H1 (cell line): ENCODE measurements at regions of chr18 and their contacts with region 1.

Region 1: DNA sequence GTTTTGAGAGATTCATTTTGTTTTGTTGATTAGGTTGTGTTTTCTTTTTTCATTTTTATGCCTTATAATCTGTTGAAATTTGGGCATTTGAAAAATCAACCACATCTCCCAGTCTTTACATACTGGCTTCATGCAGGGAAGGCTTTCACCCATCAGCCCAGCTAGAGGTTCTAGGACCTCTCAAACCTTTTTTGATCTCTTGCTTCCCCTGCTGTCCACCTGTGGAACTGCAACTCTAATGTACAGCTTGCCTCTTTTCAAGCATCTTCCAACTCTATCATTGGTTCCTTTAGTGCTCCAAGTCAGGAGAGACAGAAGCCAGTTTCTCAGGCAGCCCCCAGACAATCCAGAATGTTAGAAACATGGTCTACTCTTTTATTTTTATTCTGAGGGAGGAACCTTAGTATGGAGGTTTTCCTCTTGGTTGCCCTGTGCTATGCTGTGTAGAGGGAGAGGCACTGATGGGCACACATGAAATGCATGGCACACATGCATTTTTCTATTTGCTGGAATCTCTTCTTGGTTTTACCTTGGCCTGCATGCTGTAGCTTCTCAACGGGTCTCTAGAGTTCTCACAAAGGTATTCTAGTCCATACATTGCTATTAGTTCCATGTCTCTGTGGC is 107.2 kb upstream of the L3MBTL4 start:
- DNase-seq: peak; percentile 44 to 85
- H3K4me3 ChIP-seq: no peak overlapping the region
- H3K27ac ChIP-seq: no peak overlapping the region
- H3K4me1 ChIP-seq: no peaks in the 10 kb centered on the region
- H3K27me3 ChIP-seq: no peaks in the 10 kb centered on the region
- CTCF ChIP-seq: peak; percentile 16 to 86 (median 81)
- EP300 ChIP-seq: no peak
- POLR2A ChIP-seq: no peak
- RAD21 ChIP-seq: peak; percentile 90 to 91

Region 2: GRCh38 chr18:6389005-6389404 is 132.9 kb before region 1 on chr18:
- CTCF ChIA-PET with region 1: no interaction called
- POLR2A ChIA-PET with region 1: no interaction called
- DNase-seq: no peak
- H3K4me3 ChIP-seq: no peak overlapping the region
- H3K27ac ChIP-seq: no peak overlapping the region
- H3K4me1 ChIP-seq: no peaks in the 10 kb centered on the region
- H3K27me3 ChIP-seq: no peaks in the 10 kb centered on the region
- CTCF ChIP-seq: no peak
- EP300 ChIP-seq: no peak
- POLR2A ChIP-seq: no peak
- RAD21 ChIP-seq: no peak

Region 3: GRCh38 chr18:6441200-6441599 is 80.7 kb before region 1 on chr18:
- CTCF ChIA-PET with region 1: no interaction called
- POLR2A ChIA-PET with region 1: no interaction called
- DNase-seq: no peak
- H3K4me3 ChIP-seq: no peak overlapping the region
- H3K27ac ChIP-seq: no peak overlapping the region
- H3K4me1 ChIP-seq: no peaks in the 10 kb centered on the region; a peak in 3 of 7 replicates
- H3K27me3 ChIP-seq: no peaks in the 10 kb centered on the region; a peak in 1 of 7 replicates
- CTCF ChIP-seq: no peak
- EP300 ChIP-seq: no peak
- POLR2A ChIP-seq: no peak
- RAD21 ChIP-seq: no peak

Region 4: DNA sequence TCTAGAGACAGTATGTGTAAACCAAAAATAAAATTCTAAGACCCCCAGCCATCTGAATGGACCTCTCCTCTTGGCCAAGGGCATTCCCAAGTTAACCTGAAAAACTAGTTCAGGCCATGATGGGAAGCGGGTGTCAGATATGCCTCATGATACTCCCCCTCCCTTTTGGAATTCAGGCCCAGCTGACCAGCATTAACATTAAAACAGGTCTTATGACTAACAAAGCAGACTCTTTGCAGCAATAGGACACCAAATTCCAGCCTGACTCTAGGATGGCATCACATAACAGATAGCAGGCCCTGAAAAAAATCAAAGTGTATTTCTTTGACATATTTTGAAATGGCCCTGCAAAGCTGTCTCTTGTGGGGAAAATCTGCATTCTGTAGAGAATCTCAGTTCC is 33.9 kb before region 1 on chr18:
- CTCF ChIA-PET with region 1: interaction called, 12 read pairs
- POLR2A ChIA-PET with region 1: no interaction called
- DNase-seq: peak in 1 of 2 experiments; percentile 46
- H3K4me3 ChIP-seq: peak overlapping the region in 1 of 4 experiments; percentile 15; a peak in 1 of 8 replicates
- H3K27ac ChIP-seq: no peak overlapping the region; the same call in 1 of the 2 replicates
- H3K4me1 ChIP-seq: peaks cover 5 to 16% (median 9%) of the 10 kb centered on the region in 4 experiments; a peak in 6 of 7 replicates
- H3K27me3 ChIP-seq: no peaks in the 10 kb centered on the region
- CTCF ChIP-seq: no peak
- EP300 ChIP-seq: no peak
- POLR2A ChIP-seq: no peak
- RAD21 ChIP-seq: no peak

Region 5: DNA sequence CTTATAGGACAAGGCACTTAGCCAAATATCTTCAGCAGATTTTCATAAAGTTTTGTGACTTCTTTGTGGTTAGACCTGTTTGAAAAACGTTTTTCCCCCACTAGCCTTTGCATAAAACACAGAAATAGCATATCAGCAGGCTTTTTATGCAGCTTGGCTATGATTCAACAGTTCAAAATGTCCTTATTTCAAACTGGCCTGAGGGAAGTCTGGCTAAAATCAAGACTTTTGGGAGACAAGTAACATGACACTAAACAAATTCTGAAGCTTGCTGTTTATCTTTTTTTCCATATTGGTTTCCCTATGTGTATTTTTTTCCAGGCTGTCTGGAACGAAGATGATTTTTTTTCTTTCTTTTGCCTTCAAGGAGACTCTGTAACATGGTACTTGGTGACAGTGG is 12.1 kb before region 1 on chr18:
- CTCF ChIA-PET with region 1: interaction called, 10 read pairs
- POLR2A ChIA-PET with region 1: no interaction called
- DNase-seq: no peak
- H3K4me3 ChIP-seq: no peak overlapping the region
- H3K27ac ChIP-seq: no peak overlapping the region
- H3K4me1 ChIP-seq: peaks cover 0 to 4% (median 0%) of the 10 kb centered on the region in 4 experiments; a peak in 1 of 7 replicates
- H3K27me3 ChIP-seq: no peaks in the 10 kb centered on the region
- CTCF ChIP-seq: no peak
- EP300 ChIP-seq: no peak
- POLR2A ChIP-seq: no peak
- RAD21 ChIP-seq: no peak

Region 6: DNA sequence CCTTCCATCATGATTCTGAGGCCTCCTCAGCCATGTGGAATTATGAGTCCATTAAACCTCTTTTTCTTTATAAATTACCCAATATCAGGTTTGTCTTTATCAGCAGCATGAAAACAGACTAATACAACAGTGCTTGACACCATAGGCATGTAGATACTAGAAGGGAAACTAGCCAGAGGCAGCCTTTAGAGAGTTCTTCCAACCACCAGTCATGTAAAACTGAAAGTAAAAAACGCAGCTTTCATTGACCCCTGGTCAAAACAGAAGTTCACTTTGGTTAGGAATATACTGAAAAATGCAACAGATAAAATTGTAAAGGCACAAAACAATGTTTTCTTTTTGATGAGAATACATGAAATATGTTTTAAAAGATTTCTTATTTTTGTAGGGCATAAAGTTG is 15.6 kb after region 1 on chr18:
- CTCF ChIA-PET with region 1: interaction called, 13 read pairs
- POLR2A ChIA-PET with region 1: no interaction called
- DNase-seq: no peak
- H3K4me3 ChIP-seq: no peak overlapping the region
- H3K27ac ChIP-seq: no peak overlapping the region
- H3K4me1 ChIP-seq: 0 out of 7 replicates have a peak, but pooled peaks cover 0 to 2% (median 0%) of the 10 kb centered on the region in 4 experiments
- H3K27me3 ChIP-seq: no peaks in the 10 kb centered on the region
- CTCF ChIP-seq: no peak
- EP300 ChIP-seq: no peak
- POLR2A ChIP-seq: no peak
- RAD21 ChIP-seq: no peak

Region 7: DNA sequence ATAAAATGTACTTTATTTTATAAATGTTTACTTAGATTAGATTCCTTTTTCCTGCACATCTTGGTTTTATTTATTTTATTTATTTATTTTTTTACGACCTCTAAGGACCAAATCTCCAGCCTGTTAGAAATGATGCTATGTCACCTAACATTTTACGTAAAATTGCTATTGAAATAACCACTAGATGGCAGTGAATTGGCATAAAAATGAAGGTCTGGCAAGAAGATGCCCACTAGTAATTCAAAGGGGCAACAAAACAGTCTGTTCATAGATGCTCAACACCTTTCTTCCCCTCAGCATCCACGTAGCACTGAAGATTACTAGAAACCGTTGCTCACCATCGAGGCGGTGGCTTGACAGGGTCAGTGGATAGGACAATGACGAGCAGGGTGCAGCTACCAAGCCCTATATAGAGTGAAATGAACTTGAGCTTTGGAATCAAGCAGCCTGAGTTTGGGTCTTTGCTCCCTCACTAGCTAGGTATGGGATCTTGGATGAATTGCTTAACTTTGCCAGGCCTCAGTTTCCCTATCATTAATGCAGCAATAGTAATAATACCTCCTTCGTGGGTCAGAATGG is 21.5 kb after region 1 on chr18:
- CTCF ChIA-PET with region 1: interaction called, 13 read pairs
- POLR2A ChIA-PET with region 1: no interaction called
- DNase-seq: no peak
- H3K4me3 ChIP-seq: no peak overlapping the region
- H3K27ac ChIP-seq: no peak overlapping the region
- H3K4me1 ChIP-seq: peaks cover 0 to 3% (median 1%) of the 10 kb centered on the region in 4 experiments; a peak in 1 of 7 replicates
- H3K27me3 ChIP-seq: no peaks in the 10 kb centered on the region
- CTCF ChIP-seq: peak in 2 of 3 experiments; percentile 46 to 54; a peak in 3 of 4 replicates
- EP300 ChIP-seq: no peak
- POLR2A ChIP-seq: no peak
- RAD21 ChIP-seq: peak; percentile 80 to 83

Region 8: DNA sequence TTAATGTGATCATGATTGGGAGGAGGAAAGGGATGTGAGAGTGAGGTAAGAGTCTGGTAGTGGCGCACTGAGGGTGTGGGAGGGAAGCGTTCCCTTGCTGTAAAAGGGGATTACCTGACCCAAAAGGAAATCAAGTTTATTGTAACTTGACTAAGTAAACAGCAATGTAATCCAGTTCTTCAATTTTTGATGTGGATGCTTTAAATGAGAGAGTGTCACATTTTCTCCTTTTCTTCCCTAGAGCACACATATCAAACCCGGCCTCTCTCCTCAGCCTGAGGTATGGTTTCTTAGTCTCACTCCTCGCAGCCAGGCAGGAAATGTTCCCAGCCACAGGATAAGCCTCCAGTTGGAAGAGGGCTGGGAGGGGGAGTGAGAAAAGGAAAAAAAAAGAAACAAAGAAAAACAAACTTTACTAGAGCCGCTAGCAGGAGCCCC is 206.9 kb after region 1 on chr18:
- CTCF ChIA-PET with region 1: no interaction called
- POLR2A ChIA-PET with region 1: no interaction called
- DNase-seq: no peak
- H3K4me3 ChIP-seq: peak overlapping the region; percentile 70 to 72 (median 72)
- H3K27ac ChIP-seq: no peak overlapping the region
- H3K4me1 ChIP-seq: peaks cover 4 to 14% (median 9%) of the 10 kb centered on the region in 4 experiments; a peak in 5 of 7 replicates
- H3K27me3 ChIP-seq: no peaks in the 10 kb centered on the region
- CTCF ChIP-seq: no peak
- EP300 ChIP-seq: no peak
- POLR2A ChIP-seq: no peak
- RAD21 ChIP-seq: no peak

Region 9: GRCh38 chr18:6885992-6886796 is 364.3 kb after region 1 on chr18:
- CTCF ChIA-PET with region 1: interaction called, 19 read pairs
- POLR2A ChIA-PET with region 1: no interaction called
- DNase-seq: no peak
- H3K4me3 ChIP-seq: no peak overlapping the region
- H3K27ac ChIP-seq: no peak overlapping the region
- H3K4me1 ChIP-seq: peaks cover 0 to 5% (median 2%) of the 10 kb centered on the region in 4 experiments; a peak in 2 of 7 replicates
- H3K27me3 ChIP-seq: no peaks in the 10 kb centered on the region
- CTCF ChIP-seq: peak in 2 of 3 experiments; percentile 70 to 71; a peak in 3 of 4 replicates
- EP300 ChIP-seq: no peak
- POLR2A ChIP-seq: no peak
- RAD21 ChIP-seq: peak; percentile 96 to 97